ENCODE measurements at regions of chr12 and their contacts with region 1.

Region 1: GRCh38 chr12:85920324-85920947 is 46.3 kb downstream of the NTS start:
- DNase-seq: no peak
- ATAC-seq: no peak
- H3K4me3 ChIP-seq: no peak overlapping the region
- H3K27ac ChIP-seq: no peak overlapping the region
- H3K4me1 ChIP-seq: no peaks in the 10 kb centered on the region
- H3K27me3 ChIP-seq: no peaks in the 10 kb centered on the region

Region 2: DNA sequence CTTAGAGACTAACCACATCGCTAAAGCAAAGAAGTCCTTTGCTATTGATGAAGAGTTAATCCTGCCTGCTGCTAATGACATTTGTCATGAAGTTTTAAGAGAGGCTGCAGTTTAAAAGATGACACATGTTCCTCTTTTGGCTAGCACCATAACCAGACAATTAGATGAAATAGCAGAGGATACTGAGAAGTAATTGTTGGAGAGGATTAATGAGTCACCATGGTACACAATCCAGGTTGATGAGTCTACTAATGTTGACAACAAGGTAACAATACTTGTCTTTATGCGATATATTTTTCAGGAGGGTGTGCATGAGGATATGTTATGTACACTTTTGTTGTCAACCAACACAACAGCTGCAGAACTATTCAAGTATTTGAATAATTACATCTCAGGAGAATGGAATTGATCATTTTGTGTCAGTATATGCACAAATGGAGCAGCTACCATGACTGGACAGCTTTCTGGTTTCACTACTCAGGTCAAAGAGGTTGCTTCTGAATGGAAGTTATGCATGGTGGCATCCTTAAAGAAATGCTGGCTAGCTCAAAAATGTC is 827.5 kb before region 1 on chr12:
- intact Hi-C with region 1: loop called in 1 of 4 experiments (anchors 10 kb)
- DNase-seq: no peak
- ATAC-seq: no peak
- H3K4me3 ChIP-seq: no peak overlapping the region
- H3K27ac ChIP-seq: no peak overlapping the region
- H3K4me1 ChIP-seq: no peaks in the 10 kb centered on the region
- H3K27me3 ChIP-seq: peaks cover 2% of the 10 kb centered on the region

Region 3: DNA sequence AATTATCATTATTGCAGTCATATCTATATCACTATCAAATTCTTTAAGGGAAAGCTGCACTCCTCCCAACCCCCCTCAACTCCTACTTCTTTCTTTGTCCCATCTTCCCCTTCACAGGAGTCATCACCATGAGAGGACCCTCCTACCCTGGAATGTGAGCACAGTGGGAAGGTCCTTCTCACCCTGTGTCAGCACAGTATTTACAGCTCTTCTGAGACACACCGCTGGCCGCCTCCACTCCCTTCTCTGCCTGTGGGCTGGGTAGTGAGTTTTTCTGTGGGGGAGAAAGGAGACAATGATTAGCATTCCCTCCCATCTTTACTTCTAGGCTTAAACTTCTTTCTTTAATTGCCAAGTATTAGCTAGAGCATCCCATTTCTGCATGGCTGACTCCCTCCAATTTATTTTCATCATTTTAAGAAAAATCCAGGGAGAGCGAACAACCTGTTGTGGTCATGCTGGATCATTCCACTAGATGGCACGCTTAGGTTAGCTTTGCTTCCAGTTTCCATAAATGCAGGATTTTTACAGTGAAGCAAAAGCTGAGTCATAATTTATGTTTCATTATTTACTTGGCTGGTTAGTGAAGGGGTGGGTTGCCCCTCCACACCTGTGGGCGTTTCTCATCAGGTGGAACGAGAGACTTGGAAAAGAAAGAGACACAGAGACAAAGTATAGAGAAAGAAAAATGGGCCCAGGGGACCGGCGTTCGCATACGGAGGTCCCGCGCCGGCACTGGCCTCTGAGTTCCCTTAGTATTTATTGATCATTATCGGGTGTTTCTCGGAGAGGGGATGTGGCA is 451.9 kb before region 1 on chr12:
- intact Hi-C with region 1: loop called in 3 of 4 experiments (anchors 5 to 10 kb)
- DNase-seq: peak in 1 of 3 donors; percentile 34
- ATAC-seq: peak in 1 of 2 donors; percentile 65
- H3K4me3 ChIP-seq: peak overlapping the region; percentile 43
- H3K27ac ChIP-seq: no peak overlapping the region
- H3K4me1 ChIP-seq: no peaks in the 10 kb centered on the region
- H3K27me3 ChIP-seq: no peaks in the 10 kb centered on the region

Region 4: DNA sequence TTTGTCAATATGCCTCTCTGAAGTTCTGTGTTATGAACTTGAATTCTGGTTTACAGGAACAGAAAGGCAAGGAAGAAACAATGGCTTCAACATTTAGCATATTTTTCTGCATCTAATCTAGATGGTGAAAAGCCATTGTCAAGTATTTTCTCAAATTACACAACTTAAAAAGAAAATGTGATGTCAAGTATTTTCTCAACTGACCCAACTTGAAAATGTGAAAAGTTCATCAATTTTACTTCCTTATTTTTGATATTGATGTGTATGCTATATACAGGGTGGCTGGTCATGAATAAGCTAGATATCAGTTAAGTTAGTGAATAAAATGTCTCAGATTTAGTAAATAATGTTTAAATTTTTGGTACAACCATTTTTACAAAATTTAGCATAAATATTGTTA is 443.7 kb before region 1 on chr12:
- intact Hi-C with region 1: loop called in 1 of 4 experiments (anchors 10 kb)
- DNase-seq: no peak
- ATAC-seq: no peak
- H3K4me3 ChIP-seq: no peak overlapping the region
- H3K27ac ChIP-seq: no peak overlapping the region
- H3K4me1 ChIP-seq: no peaks in the 10 kb centered on the region
- H3K27me3 ChIP-seq: no peaks in the 10 kb centered on the region

Region 5: DNA sequence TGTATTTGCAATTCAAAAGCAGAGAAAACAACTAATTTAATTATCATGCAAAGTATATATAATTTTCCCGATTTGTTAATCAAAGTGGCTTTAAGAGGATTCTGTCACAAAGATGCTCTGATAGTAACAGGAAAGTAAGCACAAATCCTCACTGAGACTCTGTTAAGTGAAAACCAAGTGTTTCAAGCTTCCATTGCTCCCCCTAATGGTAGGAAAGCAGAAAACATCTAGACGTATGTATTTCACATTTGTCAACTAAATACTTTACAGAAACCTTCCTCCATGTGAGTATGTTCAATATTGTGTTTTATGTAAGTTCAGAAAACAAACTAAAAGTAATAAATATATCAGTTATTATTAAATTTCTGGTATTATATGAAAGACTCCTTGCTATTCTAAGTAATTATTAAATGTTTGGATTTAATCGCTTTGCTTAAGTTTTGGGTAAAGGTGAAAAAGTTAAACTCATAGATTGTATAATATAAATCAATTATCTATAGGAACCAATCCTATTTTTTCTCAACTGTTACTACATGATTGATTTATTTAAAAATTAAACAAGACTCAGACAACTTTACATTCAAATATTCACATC is 47.8 kb before region 1 on chr12:
- intact Hi-C with region 1: no loop called
- DNase-seq: no peak
- ATAC-seq: no peak
- H3K4me3 ChIP-seq: no peak overlapping the region
- H3K27ac ChIP-seq: no peak overlapping the region
- H3K4me1 ChIP-seq: no peaks in the 10 kb centered on the region
- H3K27me3 ChIP-seq: no peaks in the 10 kb centered on the region